ENCODE measurements at regions of chr9 and their contacts with region 1.

Region 1: GRCh38 chr9:131349881-131350563 is 43.9 kb upstream of the PRRC2B start:
- DNase-seq: peak; percentile 58
- H3K4me3 ChIP-seq: peak overlapping the region in 2 of 3 experiments; percentile 21 to 41
- H3K27ac ChIP-seq: no peak overlapping the region
- H3K4me1 ChIP-seq: peaks cover 8% of the 10 kb centered on the region
- H3K27me3 ChIP-seq: no peaks in the 10 kb centered on the region
- CTCF ChIP-seq: peak; percentile 75 to 88

Region 2: GRCh38 chr9:130940693-130941576 is 409.1 kb before region 1 on chr9:
- CTCF ChIA-PET with region 1: no interaction called
- dilution Hi-C with region 1: no loop called
- in situ Hi-C with region 1: no loop called
- intact Hi-C with region 1: no loop called
- DNase-seq: peak; percentile 91
- H3K4me3 ChIP-seq: no peak overlapping the region
- H3K27ac ChIP-seq: no peak overlapping the region
- H3K4me1 ChIP-seq: peaks cover 12% of the 10 kb centered on the region
- H3K27me3 ChIP-seq: no peaks in the 10 kb centered on the region
- CTCF ChIP-seq: peak; percentile 73 to 95

Region 3: GRCh38 chr9:131227112-131227958 is 122.7 kb before region 1 on chr9:
- CTCF ChIA-PET with region 1: no interaction called
- dilution Hi-C with region 1: no loop called
- in situ Hi-C with region 1: no loop called
- intact Hi-C with region 1: no loop called
- DNase-seq: no peak
- H3K4me3 ChIP-seq: no peak overlapping the region
- H3K27ac ChIP-seq: no peak overlapping the region
- H3K4me1 ChIP-seq: no peaks in the 10 kb centered on the region
- H3K27me3 ChIP-seq: no peaks in the 10 kb centered on the region
- CTCF ChIP-seq: no peak

Region 4: GRCh38 chr9:131317011-131317422 is 33.0 kb before region 1 on chr9:
- CTCF ChIA-PET with region 1: no interaction called
- dilution Hi-C with region 1: loop called (anchors 5 kb)
- in situ Hi-C with region 1: no loop called
- intact Hi-C with region 1: no loop called
- DNase-seq: no peak
- H3K4me3 ChIP-seq: no peak overlapping the region
- H3K27ac ChIP-seq: no peak overlapping the region
- H3K4me1 ChIP-seq: no peaks in the 10 kb centered on the region
- H3K27me3 ChIP-seq: no peaks in the 10 kb centered on the region
- CTCF ChIP-seq: no peak

Region 5: GRCh38 chr9:131423171-131423581 is 73.2 kb after region 1 on chr9:
- CTCF ChIA-PET with region 1: no interaction called
- dilution Hi-C with region 1: no loop called
- in situ Hi-C with region 1: no loop called
- intact Hi-C with region 1: loop called (anchors 1 kb)
- DNase-seq: peak; percentile 97
- H3K4me3 ChIP-seq: peak overlapping the region in 1 of 3 experiments; percentile 20
- H3K27ac ChIP-seq: no peak overlapping the region
- H3K4me1 ChIP-seq: peaks cover 44% of the 10 kb centered on the region
- H3K27me3 ChIP-seq: no peaks in the 10 kb centered on the region
- CTCF ChIP-seq: no peak

Region 6: GRCh38 chr9:131478421-131478868 is 128.4 kb after region 1 on chr9:
- CTCF ChIA-PET with region 1: no interaction called
- dilution Hi-C with region 1: no loop called
- in situ Hi-C with region 1: no loop called
- intact Hi-C with region 1: loop called (anchors 1 kb)
- DNase-seq: no peak
- H3K4me3 ChIP-seq: no peak overlapping the region
- H3K27ac ChIP-seq: no peak overlapping the region
- H3K4me1 ChIP-seq: no peaks in the 10 kb centered on the region
- H3K27me3 ChIP-seq: no peaks in the 10 kb centered on the region
- CTCF ChIP-seq: peak; percentile 45 to 55

Region 7: DNA sequence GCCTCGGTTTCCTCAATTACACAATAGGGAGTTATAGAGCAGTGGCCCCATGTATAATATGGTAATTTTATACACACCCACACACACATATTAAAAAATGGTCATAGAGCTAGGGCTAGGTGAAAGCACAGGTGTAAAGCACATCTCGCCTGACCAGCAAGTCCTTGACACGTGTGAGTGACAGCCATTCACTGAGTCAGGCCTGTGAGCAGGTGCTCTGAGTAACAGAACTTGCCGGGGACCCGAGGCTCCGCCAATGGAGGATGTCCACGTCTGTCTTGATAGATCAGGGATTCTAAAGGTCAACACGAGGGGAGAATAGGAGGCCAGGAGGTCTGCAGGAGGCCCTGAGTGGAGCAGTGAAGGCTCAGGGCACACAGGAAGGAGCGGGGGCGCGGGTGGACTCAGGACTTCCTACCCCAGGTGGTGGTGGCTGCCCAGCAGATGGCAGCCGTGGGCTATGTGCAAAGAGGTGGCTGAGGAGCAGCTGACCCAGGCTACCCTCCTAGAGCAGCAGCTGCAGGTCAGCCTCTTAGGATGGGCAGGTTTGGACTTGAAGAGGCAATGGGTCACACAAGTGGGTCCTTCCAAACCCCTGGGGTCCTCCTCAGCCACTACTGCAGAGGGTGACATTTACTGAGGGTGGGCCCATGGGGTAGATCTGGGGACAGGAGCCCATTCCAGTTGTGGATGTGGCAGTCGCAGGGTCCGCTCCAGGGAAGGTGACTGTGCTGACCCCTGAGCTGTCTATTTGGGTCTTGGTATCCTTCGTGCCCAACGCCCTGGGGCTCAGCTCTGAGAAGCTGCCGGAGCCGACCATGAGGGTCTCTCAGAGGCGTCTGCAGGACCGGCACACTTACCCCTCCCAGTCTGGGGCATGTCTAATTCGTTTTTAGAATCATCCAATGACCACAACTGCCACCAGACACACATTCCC is 241.2 kb after region 1 on chr9:
- CTCF ChIA-PET with region 1: no interaction called
- dilution Hi-C with region 1: no loop called
- in situ Hi-C with region 1: no loop called
- intact Hi-C with region 1: loop called (anchors 1 kb)
- DNase-seq: peak; percentile 62
- H3K4me3 ChIP-seq: no peak overlapping the region
- H3K27ac ChIP-seq: no peak overlapping the region
- H3K4me1 ChIP-seq: peaks cover 6% of the 10 kb centered on the region
- H3K27me3 ChIP-seq: no peaks in the 10 kb centered on the region
- CTCF ChIP-seq: peak; percentile 81 to 94

Region 8: GRCh38 chr9:131656356-131657036 is 306.5 kb after region 1 on chr9:
- CTCF ChIA-PET with region 1: no interaction called
- dilution Hi-C with region 1: no loop called
- in situ Hi-C with region 1: no loop called
- intact Hi-C with region 1: no loop called
- DNase-seq: no peak
- H3K4me3 ChIP-seq: no peak overlapping the region
- H3K27ac ChIP-seq: peak overlapping the region; percentile 45
- H3K4me1 ChIP-seq: peaks cover 49% of the 10 kb centered on the region
- H3K27me3 ChIP-seq: no peaks in the 10 kb centered on the region
- CTCF ChIP-seq: no peak